WTC11 (cell line): ENCODE measurements at regions of chr11 and their contacts with region 1.

Region 1: DNA sequence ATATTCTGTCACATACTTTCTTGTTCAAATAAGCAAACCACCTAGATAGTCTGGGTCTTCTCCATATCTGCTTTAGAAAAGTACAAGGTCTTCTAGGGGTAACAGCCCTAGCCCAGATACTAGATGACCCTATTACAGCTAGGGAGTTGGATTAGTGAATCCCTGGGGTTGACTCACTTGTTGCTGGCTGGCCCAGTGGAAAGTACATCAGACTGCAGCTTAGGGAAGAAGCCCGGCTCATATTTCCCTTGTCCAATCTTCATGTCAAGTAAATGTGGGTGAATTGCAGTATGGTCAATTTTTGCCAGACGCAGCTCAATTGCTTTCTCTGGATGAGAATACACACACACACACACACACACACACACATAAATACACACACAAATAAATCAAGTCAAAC is 79.1 kb upstream of the SCUBE2 start:
- DNase-seq: no peak
- ATAC-seq: no peak
- H3K4me3 Mint-ChIP-seq: no peak overlapping the region
- H3K27ac Mint-ChIP-seq: no peak overlapping the region
- H3K4me1 Mint-ChIP-seq: peaks cover 17% of the 10 kb centered on the region
- H3K27me3 Mint-ChIP-seq: no peaks in the 10 kb centered on the region
- CTCF ChIP-seq: no peak

Region 2: GRCh38 chr11:9250139-9250582 is 79.7 kb after region 1 on chr11:
- CTCF ChIA-PET with region 1: no interaction called
- POLR2A ChIA-PET with region 1: no interaction called
- DNase-seq: no peak
- ATAC-seq: no peak
- H3K4me3 Mint-ChIP-seq: no peak overlapping the region
- H3K27ac Mint-ChIP-seq: peak overlapping the region; percentile 66
- H3K4me1 Mint-ChIP-seq: peaks cover 20% of the 10 kb centered on the region
- H3K27me3 Mint-ChIP-seq: no peaks in the 10 kb centered on the region
- CTCF ChIP-seq: no peak

Region 3: GRCh38 chr11:9396752-9397151 is 226.3 kb after region 1 on chr11:
- CTCF ChIA-PET with region 1: interaction called, 3 read pairs
- POLR2A ChIA-PET with region 1: interaction called, 10 read pairs
- DNase-seq: no peak
- ATAC-seq: no peak
- H3K4me3 Mint-ChIP-seq: no peak overlapping the region
- H3K27ac Mint-ChIP-seq: peak overlapping the region; percentile 76
- H3K4me1 Mint-ChIP-seq: peaks cover 36% of the 10 kb centered on the region
- H3K27me3 Mint-ChIP-seq: no peaks in the 10 kb centered on the region
- CTCF ChIP-seq: no peak